ENCODE measurements at regions of chr2 and their contacts with region 1.

Region 1: GRCh38 chr2:209340522-209340921 is 83.3 kb upstream of the MAP2 start:
- DNase-seq: no peak
- H3K4me3 ChIP-seq: no peak overlapping the region
- H3K27ac ChIP-seq: no peak overlapping the region
- H3K4me1 ChIP-seq: no peaks in the 10 kb centered on the region
- H3K27me3 ChIP-seq: peaks cover 10% of the 10 kb centered on the region; the same call in 1 of the 2 replicates

Region 2: GRCh38 chr2:209423562-209424198 is 83.2 kb after region 1 on chr2 and contains the start of gene MAP2:
- in situ Hi-C with region 1: loop called (anchors 5 kb)
- DNase-seq: peak; percentile 93
- H3K4me3 ChIP-seq: peak within 1 kb of the TSS; percentile 82
- H3K27ac ChIP-seq: no peak within 1 kb of the TSS
- H3K4me1 ChIP-seq: no peaks in the 10 kb centered on the region
- H3K27me3 ChIP-seq: no peaks in the 10 kb centered on the region; the same call in 1 of the 2 replicates
- total RNA-seq, gene MAP2: 1.0 and 7.6 TPM in 2 replicates

Measured in GM23248 (cell line).